GM10248 (cell line): ENCODE measurements at regions of chr15 and their contacts with region 1.

Region 1: GRCh38 chr15:45705510-45706473 is 71.0 kb downstream of the SQOR start:
- DNase-seq: peak; percentile 73
- CTCF ChIP-seq: peak; percentile 86

Region 2: DNA sequence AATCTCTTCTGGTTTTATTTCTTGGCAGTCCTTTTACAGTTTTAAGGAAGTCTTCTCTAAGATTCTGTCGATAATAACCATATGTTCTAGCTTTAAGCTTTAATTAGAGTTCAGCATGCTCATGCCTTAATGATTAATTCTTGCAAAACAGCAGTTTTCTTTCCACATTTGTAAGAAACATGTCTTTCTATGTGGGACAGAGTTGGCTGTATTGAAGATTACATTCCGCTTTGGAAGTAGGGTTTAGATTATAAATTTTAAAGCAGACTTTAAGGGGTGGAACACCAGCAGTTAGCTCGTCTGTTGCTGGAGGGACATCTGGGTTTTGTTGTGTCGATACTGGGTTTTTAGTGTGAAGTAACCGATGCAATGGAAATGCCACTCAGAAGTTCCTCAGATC is 35.7 kb before region 1 on chr15:
- CTCF ChIA-PET with region 1: interaction called, 14 read pairs
- POLR2A ChIA-PET with region 1: no interaction called
- DNase-seq: no peak
- CTCF ChIP-seq: no peak

Region 3: GRCh38 chr15:45678459-45679178 is 27.2 kb before region 1 on chr15:
- CTCF ChIA-PET with region 1: interaction called, 21 read pairs
- POLR2A ChIA-PET with region 1: no interaction called
- DNase-seq: no peak
- CTCF ChIP-seq: no peak

Region 4: DNA sequence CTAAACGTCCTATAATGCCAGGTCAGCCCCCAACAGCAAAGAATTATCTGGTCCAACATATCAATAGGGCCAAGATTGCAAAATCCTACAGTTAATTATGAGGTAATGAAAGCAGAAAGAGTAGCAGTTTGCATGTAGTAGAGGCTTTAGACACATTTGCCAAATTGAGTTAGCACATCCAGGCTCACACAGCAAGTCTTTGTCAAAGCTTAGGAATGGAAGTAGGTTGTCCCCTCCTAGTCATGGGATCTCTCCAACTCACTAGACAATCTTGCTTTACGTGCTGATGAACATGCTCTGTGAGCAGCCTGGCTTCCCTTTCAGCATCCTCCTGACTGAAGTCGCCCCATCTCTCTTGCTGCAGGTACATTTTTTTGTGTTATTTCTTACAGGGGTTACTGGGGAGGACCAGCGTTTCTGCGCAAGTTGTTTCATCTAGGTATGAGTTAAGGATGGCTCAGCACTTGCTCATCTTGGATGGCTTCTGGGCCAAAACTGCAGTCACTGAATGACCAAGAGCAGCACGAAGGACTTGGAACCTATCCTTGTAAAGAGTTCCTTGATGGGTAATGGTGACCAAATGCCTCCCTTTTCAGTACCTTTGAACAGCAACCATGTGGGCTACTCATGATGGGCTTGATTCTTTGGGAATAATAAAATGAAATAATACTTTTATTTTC is 15.1 kb before region 1 on chr15:
- CTCF ChIA-PET with region 1: interaction called, 37 read pairs
- POLR2A ChIA-PET with region 1: no interaction called
- DNase-seq: no peak
- CTCF ChIP-seq: no peak

Region 5: DNA sequence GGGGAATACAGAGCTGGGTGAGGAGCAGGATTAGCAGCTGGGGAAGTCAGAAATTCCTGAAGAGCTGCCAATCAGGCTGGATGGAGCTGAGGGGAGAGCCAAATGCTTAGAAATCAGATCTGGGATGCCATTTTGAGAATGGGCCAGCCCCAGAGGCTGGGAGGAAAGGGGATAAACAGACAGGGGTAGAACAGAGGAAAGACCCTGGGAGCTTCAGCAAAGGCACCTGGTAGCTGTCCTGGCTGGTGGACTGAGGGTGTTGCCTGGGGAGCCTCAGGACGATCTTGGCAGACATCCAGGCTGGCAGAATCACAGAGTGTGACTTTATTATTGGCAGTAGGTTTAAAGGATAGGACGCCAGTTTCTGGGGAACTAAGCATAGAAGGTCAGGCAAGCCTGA is 26.9 kb after region 1 on chr15:
- CTCF ChIA-PET with region 1: interaction called, 14 read pairs
- POLR2A ChIA-PET with region 1: no interaction called
- DNase-seq: no peak
- CTCF ChIP-seq: no peak

Region 6: DNA sequence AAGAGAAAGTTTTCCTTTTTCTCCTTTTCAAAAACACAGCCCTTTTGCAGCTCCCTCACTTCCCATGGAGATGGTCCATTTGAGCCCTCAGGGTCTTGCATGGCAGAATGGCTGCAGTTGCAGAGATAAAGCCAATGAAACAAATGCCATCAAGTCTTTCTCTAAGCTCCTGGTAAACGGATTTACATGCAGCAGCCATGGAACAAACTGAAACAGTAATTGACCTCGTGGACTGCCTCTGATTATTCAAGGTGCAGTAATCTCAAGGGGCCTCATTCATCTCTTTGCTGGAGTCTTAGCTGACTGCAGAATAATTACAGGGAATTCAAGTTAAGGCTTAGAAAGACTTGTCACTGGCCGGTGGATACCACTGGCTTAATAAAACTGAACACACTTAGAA is 54.1 kb after region 1 on chr15:
- CTCF ChIA-PET with region 1: no interaction called
- POLR2A ChIA-PET with region 1: no interaction called
- DNase-seq: no peak
- CTCF ChIP-seq: no peak

Region 7: GRCh38 chr15:45790325-45790943 is 84.6 kb after region 1 on chr15:
- CTCF ChIA-PET with region 1: interaction called, 36 read pairs
- POLR2A ChIA-PET with region 1: no interaction called
- DNase-seq: peak; percentile 27
- CTCF ChIP-seq: peak; percentile 44